Aorta (tissue), 5 donors: ENCODE measurements at regions of chr1 and their contacts with region 1.

Region 1: GRCh38 chr1:234499119-234499942 is 20.4 kb upstream of the TARBP1 start:
- DNase-seq: peak; percentile 94 to 97
- ATAC-seq: peak; percentile 97
- H3K4me3 ChIP-seq: no peak overlapping the region
- H3K27ac ChIP-seq: peak overlapping the region; percentile 62 to 97
- H3K4me1 ChIP-seq: peaks cover 0 to 15% of the 10 kb centered on the region in 2 donors
- H3K27me3 ChIP-seq: no peaks in the 10 kb centered on the region

Region 2: GRCh38 chr1:234599617-234600417 is 100.5 kb after region 1 on chr1:
- intact Hi-C with region 1: loop called (anchors 1 to 5 kb)
- DNase-seq: peak; percentile 91 to 96
- ATAC-seq: peak; percentile 94
- H3K4me3 ChIP-seq: peak overlapping the region in 1 of 2 donors; percentile 69
- H3K27ac ChIP-seq: peak overlapping the region; percentile 64 to 94
- H3K4me1 ChIP-seq: peaks cover 0 to 4% of the 10 kb centered on the region in 2 donors
- H3K27me3 ChIP-seq: no peaks in the 10 kb centered on the region

Region 3: DNA sequence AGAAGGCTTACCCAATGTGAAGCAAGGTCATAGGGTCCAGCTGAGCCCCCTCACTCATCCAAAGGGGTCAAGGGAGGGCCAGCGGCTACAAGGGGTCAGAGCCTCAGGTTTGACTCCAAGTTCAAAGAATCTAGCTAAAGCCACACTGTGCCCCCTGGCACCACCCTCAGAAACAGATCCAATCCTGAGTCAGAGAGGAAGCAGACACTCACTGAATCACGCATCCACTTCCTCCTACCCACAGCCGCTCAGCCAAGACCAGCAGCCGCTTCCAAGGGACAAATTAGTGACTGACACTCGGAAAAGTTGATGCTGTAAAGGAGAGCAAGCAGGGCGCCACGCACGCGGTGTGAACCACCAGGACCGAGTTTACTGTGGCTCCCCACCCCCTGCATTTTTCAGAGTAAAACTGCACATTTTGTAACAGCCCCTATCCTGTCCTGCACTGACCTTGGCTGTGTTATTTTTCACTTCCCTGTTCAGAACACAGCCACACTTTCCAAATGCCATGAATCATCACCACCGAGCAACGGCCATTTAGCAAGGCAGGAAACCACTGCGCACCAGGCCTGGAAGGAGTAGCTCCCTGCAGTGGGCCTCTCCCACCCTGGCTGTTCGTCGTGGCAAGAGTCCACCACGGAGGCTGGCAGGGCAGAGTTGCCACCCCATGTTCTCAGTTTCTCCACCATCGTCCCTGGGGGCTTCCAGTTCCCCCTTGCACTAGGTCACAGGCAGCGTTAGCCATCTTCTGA is 481.5 kb after region 1 on chr1:
- intact Hi-C with region 1: loop called (anchors 5 kb)
- DNase-seq: peak; percentile 95
- ATAC-seq: peak; percentile 90
- H3K4me3 ChIP-seq: no peak overlapping the region
- H3K27ac ChIP-seq: peak overlapping the region; percentile 97 to 98
- H3K4me1 ChIP-seq: peaks cover 7 to 10% of the 10 kb centered on the region in 2 donors
- H3K27me3 ChIP-seq: no peaks in the 10 kb centered on the region

Region 4: DNA sequence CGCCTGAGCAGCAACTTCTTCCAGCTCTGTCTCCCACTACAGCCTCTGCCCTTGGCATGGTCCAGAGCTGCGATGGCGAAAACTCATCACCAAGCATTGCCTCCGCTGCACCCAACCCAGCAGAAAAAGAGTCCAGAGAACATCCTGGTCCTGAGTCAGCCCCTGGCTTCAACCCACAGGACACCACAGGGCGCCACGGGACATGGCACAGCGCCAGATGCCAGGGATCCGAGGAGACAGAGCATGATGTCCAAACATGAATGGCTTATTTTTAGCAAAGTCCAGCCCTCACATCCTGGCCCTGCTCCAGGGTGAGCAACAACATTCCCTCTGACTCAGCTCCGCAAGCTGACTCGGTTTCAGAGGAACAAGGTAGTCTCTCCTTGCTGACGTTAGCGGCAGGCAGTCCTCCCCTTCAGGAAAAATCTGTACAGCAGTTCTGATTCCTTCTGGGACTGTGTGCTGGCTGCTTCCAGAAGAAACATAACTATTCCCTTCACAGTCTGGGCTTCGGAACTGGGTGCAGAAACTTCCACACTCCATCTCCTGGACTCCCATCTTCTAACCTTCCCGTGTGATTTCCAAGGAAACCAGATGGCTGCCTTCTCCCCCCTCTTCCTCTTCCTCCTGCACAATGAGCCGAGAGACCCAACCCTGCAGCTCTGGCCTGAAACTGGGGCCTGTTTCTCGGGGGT is 498.0 kb after region 1 on chr1:
- intact Hi-C with region 1: loop called in 1 of 2 experiments (anchors 5 kb)
- DNase-seq: peak; percentile 99 to 100
- ATAC-seq: peak; percentile 96
- H3K4me3 ChIP-seq: no peak overlapping the region
- H3K27ac ChIP-seq: peak overlapping the region; percentile 94 to 99
- H3K4me1 ChIP-seq: peaks cover 0 to 3% of the 10 kb centered on the region in 2 donors
- H3K27me3 ChIP-seq: no peaks in the 10 kb centered on the region